GM10248 (cell line): ENCODE measurements at regions of chr17 and their contacts with region 1.

Region 1: DNA sequence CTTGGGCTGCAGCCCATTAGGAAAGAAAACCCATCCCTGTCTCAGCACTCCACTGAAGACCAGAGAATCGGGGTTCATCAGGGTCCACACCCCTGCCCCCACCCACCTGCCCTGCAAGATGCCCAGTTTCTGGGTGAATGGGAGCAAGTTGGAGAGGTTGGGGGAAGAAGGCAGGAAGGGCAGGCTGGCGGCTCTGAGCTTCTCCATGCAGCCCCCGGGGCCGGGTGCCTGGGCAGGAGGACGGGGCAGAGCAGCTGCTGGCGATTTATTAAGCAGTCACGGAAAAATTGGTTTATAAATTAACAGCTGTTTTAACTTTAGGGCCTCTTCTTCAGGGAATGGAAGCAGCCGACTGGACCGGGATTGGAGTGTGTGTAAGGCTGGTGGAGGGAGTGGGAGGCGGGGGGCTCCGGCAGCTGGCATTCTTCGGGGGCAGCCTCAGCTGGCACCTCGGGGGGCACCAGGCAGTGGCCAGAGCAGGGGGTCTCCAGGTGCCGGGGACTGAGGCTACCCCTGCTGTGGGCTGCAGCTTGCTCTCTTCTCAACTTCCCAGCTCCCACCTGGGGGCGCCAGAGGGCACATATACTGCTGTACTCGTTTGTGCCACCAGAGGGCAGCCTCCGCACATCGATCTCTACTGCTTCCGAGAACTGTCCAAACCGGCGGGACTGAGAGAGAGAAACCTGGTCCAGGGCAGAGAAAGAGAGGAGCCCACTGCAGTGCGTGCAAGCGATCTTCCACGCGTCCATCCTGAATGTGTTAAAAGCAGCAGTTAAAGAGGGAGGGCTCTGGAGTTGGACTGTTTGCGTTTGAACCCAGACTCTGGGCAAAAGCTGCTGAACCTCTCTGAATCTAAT is 5.0 kb upstream of the PPP1R1B start:
- DNase-seq: peak; percentile 90
- CTCF ChIP-seq: peak; percentile 100

Region 2: DNA sequence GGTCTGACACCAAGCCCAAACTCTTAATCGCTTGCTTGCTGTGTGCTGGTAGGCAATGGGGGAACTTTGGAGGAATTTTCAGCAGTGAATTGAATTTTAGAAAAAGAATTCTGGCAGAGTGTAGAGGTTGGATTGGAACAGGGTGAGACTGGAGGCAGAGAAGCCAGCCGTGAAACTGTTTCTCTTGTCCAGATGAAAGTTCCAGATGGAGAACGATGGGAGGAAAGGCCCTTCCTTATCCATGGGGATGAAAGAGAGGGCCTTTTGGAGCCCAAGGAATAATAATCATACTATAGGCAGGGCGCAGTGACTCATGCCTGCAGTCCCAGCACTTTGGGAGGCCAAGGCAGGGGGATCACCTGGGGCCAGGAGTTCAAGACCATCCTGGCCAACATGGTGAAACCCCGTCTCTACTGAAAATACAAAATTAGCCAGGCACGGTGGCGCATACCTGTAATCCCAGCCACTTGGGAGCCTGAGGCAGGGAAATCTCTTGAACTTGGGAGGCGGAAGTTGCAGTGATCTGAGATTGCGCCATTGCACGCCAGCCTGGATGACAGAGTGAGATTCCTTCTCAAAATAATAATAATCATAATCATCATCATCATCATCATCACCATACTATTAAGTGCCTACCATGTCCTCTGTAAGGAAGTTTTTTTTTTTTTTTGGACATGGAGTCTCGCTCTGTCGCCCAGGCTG is 39.8 kb before region 1 on chr17:
- CTCF ChIA-PET with region 1: interaction called, 10 read pairs
- POLR2A ChIA-PET with region 1: no interaction called
- DNase-seq: no peak
- CTCF ChIP-seq: no peak

Region 3: GRCh38 chr17:39636927-39637736 is 15.4 kb after region 1 on chr17 and contains the start of gene STARD3:
- CTCF ChIA-PET with region 1: interaction called, 166 read pairs
- POLR2A ChIA-PET with region 1: interaction called, 3 read pairs
- DNase-seq: peak; percentile 97
- CTCF ChIP-seq: no peak

Region 4: GRCh38 chr17:39677542-39678339 is 56.0 kb after region 1 on chr17:
- CTCF ChIA-PET with region 1: interaction called, 134 read pairs
- POLR2A ChIA-PET with region 1: no interaction called
- DNase-seq: no peak
- CTCF ChIP-seq: no peak

Region 5: DNA sequence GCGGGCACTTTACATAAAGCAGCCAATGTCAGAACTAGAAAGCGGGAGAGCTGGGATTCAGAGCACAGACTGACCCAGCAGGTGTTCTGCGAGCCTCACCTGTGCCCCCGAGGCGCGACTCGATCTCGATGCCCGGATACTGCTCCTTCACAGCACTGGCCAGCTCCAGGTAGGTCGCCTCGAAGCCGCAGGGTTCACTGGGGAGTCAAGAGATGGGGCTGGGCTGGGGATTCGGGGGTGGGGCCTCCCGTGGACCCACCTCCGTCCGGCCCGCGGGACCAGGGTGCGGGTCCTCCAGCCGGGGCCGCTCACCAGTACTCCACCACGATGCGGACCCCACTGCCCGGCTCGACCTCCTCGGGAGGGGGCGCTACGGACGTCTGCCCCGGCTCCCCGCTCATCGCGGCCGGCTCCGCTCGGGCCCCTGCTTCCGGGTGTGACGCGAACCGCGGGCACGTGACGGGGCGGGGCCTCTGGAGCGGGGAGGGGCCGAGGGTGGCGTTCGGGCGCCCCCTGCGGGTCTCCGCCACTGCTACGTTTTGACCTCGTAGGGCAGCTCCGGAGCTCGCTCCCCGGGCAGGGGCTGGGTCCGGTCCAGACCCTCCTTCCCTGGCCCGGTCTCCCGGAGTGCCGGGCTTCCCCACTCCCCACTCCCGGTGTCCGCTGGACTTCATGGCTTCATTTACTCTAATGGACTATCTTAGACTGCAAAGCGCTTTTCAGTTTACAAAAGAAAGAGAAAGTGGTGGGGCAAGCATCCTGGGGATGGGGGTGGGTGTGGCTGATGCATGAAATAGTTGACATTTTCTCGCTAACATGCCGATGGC is 108.6 kb after region 1 on chr17 and contains the start of gene MIEN1:
- CTCF ChIA-PET with region 1: interaction called, 57 read pairs
- POLR2A ChIA-PET with region 1: no interaction called
- DNase-seq: peak; percentile 99
- CTCF ChIP-seq: peak; percentile 66

Region 6: DNA sequence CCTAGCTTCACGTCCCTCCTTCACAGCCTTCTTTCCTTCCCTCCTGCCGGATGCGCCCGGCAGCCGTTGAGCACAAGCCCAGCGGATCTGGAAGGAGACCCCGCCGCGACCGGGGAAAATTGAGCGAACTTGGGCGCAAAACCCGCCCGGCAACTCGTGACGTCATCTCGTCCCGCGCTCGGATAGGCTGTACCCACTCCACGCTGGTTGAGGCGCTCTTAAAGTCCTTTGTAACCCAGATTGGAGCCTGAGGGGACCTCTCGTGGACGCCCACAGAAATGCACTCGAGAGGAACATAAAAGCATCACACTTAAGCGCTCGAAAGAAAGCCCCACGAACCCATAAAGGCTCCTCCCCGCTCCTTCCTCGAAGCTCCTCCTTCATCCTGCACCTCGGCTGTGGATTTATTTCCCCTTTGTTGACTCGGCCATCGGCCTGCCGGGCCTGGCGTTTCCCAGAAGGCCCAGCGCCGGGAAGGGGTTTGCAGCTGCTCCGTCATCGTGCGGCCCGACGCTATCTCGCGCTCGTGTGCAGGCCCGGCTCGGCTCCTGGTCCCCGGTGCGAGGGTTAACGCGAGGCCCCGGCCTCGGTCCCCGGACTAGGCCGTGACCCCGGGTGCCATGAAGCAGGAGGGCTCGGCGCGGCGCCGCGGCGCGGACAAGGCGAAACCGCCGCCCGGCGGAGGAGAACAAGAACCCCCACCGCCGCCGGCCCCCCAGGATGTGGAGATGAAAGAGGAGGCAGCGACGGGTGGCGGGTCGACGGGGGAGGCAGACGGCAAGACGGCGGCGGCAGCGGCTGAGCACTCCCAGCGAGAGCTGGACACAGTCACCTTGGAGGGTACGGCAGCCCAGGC is 358.8 kb after region 1 on chr17 and contains the start of gene PSMD3:
- CTCF ChIA-PET with region 1: interaction called, 30 read pairs
- POLR2A ChIA-PET with region 1: interaction called, 3 read pairs
- DNase-seq: peak; percentile 96
- CTCF ChIP-seq: peak; percentile 75